PC-3 (cell line): ENCODE measurements at regions of chr17 and their contacts with region 1.

Region 1: GRCh38 chr17:17237026-17237799 is at the start of gene FLCN:
- DNase-seq: peak; percentile 78
- ATAC-seq: peak; percentile 76
- H3K4me3 ChIP-seq: peak within 1 kb of the TSS; percentile 93
- H3K27ac ChIP-seq: peak within 1 kb of the TSS; percentile 79
- H3K4me1 ChIP-seq: peaks cover 11% of the 10 kb centered on the region
- H3K27me3 ChIP-seq: no peaks in the 10 kb centered on the region
- CTCF ChIP-seq: no peak
- total RNA-seq, gene FLCN: 30.6 and 30.8 TPM in 2 replicates

Region 2: GRCh38 chr17:17151962-17152361 is 85.3 kb before region 1 on chr17:
- CTCF ChIA-PET with region 1: no interaction called
- POLR2A ChIA-PET with region 1: no interaction called
- intact Hi-C with region 1: loop called (anchors 2 kb)
- DNase-seq: peak; percentile 99
- ATAC-seq: peak; percentile 78
- H3K4me3 ChIP-seq: no peak overlapping the region; the same call in 1 of the 2 replicates
- H3K27ac ChIP-seq: peak overlapping the region; percentile 97
- H3K4me1 ChIP-seq: peaks cover 94% of the 10 kb centered on the region
- H3K27me3 ChIP-seq: no peaks in the 10 kb centered on the region
- CTCF ChIP-seq: no peak

Region 3: GRCh38 chr17:17252149-17252661 is 15.0 kb after region 1 on chr17:
- CTCF ChIA-PET with region 1: no interaction called
- POLR2A ChIA-PET with region 1: no interaction called
- intact Hi-C with region 1: no loop called
- DNase-seq: no peak
- ATAC-seq: no peak
- H3K4me3 ChIP-seq: no peak overlapping the region
- H3K27ac ChIP-seq: no peak overlapping the region
- H3K4me1 ChIP-seq: no peaks in the 10 kb centered on the region
- H3K27me3 ChIP-seq: no peaks in the 10 kb centered on the region
- CTCF ChIP-seq: no peak

Region 4: GRCh38 chr17:17280613-17281549 is 43.7 kb after region 1 on chr17 and contains the start of gene COPS3:
- CTCF ChIA-PET with region 1: interaction called, 4 read pairs
- POLR2A ChIA-PET with region 1: interaction called, 3 read pairs
- intact Hi-C with region 1: loop called (anchors 5 kb)
- DNase-seq: peak; percentile 99
- ATAC-seq: peak; percentile 93
- H3K4me3 ChIP-seq: peak within 1 kb of the TSS; percentile 82
- H3K27ac ChIP-seq: peak within 1 kb of the TSS; percentile 88
- H3K4me1 ChIP-seq: peaks cover 16% of the 10 kb centered on the region
- H3K27me3 ChIP-seq: no peaks in the 10 kb centered on the region
- CTCF ChIP-seq: no peak
- total RNA-seq, gene COPS3: 178 and 205 TPM in 2 replicates